Posterior cingulate gyrus (tissue), 11 donors: ENCODE measurements at regions of chrX and their contacts with region 1.

Region 1: DNA sequence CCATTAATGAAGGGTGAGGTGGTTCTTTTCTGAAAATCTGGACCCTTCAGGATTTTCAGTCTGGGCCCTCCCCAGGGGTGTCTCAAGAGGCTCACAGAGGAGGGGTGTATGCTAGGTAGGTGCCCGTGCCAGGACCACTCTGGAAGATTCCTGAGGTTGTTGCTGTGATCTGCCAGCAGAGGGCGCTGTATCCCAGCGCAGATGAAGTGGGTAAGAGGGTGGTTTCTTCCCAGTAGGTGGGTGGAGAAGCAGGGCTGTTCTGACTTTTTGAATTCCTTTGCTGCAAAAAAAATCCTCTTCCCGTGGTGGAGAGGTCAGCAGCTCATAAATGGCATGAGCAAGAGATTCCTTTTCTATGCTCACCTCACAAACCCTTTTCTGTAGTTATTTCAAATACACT is 51.1 kb downstream of the SCML1 start:
- DNase-seq: peak in 7 of 10 donors; percentile 22 to 90 (median 45)

Region 2: DNA sequence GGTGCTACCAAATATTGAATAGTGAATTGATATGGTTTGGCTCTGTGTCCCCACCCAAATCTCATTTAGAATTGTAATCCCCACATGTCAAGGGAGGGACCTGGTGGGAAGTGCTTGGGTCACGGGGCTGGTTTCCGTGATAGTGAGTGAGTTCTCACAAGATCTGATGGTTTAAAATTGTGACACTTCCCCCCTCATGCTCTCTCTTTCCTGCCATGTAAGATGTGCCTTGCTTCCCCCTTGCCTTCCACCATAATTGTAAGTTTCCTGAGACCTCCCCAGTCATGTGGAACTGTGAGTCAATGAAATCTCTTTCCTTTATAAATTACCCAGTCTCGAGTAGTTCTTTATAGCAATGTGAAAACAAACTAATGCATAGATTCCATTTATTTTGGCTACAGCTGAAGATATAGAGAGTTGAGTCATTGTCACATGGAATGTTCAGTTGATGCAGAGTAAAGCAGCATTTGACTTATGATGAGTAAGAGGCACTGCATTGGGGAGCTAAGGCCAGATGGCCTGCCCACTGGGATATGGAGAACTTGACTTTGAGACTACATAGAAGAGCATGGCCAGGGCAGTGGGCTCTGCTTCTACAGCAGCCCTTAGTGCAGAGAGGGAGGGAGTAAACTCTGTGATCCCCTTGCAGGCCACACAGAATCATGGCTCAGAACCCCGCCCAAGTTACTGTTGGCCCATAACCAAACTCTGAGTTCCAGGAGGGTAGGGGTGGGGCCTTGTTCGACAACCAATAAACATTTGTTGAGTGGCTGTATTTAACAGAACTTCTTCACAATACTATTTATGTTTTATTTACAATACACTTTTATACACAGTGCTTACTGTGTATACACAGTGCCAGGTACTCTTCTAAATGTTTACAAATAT is 38.4 kb after region 1 on chrX:
- intact Hi-C with region 1: no loop called
- DNase-seq: no peak

Region 3: DNA sequence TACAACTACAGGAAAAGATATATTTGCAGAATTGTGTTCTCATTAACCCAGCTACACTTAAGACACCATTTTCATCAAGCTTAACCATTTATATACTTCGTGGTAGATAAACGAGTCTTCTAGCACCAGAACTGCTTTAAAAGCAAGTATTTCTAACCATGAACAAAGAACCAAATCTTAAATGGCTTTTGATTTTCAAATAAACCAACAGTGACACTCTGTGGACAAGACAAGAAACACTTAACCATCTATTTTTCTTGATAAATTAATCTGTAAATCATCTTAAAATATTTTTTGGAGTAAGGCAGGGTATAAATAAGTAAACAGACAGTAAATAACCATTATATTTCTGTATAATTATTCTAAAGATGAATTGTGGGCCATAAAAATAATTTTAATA is 422.0 kb after region 1 on chrX:
- intact Hi-C with region 1: loop called (anchors 2 kb)
- DNase-seq: no peak

Region 4: GRCh38 chrX:18377796-18378195 is 589.4 kb after region 1 on chrX:
- intact Hi-C with region 1: loop called (anchors 5 kb)
- DNase-seq: no peak